Activated CD4-positive, alpha-beta T cell treated with anti-CD3 and anti-CD28 coated beads, Interleukin-2, amount 10 ng/mL, durations not matched to agents 7 days and 5 days (primary cell): ENCODE measurements at regions of chr11 and their contacts with region 1.

Region 1: GRCh38 chr11:45771566-45772448 is 33.1 kb upstream of the SLC35C1 start:
- DNase-seq: peak; percentile 82
- H3K4me3 Mint-ChIP-seq: peak overlapping the region; percentile 74
- H3K27ac Mint-ChIP-seq: peak overlapping the region; percentile 66
- H3K4me1 Mint-ChIP-seq: peaks cover 16% of the 10 kb centered on the region
- H3K27me3 Mint-ChIP-seq: peaks cover 3% of the 10 kb centered on the region

Region 2: DNA sequence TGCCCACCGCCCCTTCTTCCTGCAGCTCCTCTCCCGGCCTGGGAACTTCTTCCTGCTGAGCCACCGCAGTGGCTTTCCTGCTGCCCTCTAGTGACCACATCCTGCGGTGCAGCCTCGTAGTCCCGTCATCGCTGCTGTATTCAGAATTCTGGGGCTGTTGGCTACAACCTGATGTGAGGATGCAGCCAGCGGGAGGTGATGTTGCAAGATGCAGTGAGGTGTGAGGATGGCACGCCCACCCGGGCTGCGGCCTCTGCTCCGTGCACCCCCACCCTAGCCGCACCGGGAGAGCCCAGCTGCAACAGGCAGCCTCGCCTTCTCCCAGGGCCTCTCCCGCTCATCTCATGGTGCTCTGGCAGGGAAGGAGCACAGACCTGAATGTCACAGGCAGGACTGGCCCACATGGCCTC is 116.5 kb before region 1 on chr11:
- CTCF ChIA-PET with region 1: no interaction called
- POLR2A ChIA-PET with region 1: no interaction called
- DNase-seq: peak; percentile 50
- H3K4me3 Mint-ChIP-seq: no peak overlapping the region
- H3K27ac Mint-ChIP-seq: no peak overlapping the region
- H3K4me1 Mint-ChIP-seq: peaks cover 4% of the 10 kb centered on the region
- H3K27me3 Mint-ChIP-seq: peaks cover 7% of the 10 kb centered on the region

Region 3: DNA sequence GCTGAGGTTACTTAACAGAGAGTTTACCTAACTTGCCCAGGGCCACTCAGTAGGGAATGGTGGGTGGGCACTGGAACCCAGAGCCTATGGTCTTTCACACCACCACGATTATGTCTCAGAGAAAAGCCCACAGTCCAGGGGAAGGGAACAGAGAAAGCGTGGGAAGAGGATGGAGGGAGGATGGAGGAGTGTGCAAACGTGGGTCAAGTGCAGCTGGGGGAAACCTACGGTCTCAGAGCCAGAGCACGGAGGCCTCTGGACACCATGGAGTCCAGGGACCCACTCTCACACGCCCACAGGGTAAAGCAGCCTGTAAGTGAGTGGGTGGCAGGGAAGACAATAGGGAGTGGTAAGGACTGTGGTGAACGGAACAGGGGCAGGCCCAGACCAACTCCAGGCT is 14.1 kb before region 1 on chr11:
- CTCF ChIA-PET with region 1: interaction called, 12 read pairs
- POLR2A ChIA-PET with region 1: no interaction called
- DNase-seq: no peak
- H3K4me3 Mint-ChIP-seq: no peak overlapping the region
- H3K27ac Mint-ChIP-seq: no peak overlapping the region
- H3K4me1 Mint-ChIP-seq: no peaks in the 10 kb centered on the region
- H3K27me3 Mint-ChIP-seq: no peaks in the 10 kb centered on the region

Region 4: DNA sequence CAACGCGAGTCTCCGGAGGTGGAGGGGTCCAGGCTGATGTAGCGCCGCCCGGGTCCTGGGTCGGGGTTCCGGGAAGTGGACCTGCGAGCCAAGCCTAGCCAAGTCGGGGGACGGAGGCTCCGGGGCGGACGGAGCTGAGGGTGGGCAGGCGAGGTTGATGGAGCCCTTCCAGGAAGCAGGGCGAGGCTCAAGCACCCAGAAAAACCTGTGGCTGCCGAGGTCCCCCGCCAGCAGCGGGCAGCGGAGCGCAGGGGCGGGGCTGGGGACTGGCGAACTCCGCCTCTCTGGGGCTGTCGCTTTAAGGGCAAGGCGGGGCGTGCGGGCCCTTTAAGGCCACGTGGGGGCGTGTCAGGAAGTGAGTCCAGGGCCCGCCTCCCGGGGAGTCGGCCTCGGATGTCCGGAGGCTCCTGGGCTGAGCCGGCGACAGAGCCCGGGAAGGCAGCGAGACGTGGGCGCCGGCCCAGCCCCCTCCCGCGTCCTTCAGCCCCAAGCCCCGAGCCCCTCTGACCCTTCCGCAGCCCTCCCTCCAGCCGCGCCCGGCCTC is 33.0 kb after region 1 on chr11 and contains the start of gene SLC35C1:
- CTCF ChIA-PET with region 1: interaction called, 14 read pairs
- POLR2A ChIA-PET with region 1: no interaction called
- DNase-seq: peak; percentile 97
- H3K4me3 Mint-ChIP-seq: peak within 1 kb of the TSS; percentile 88
- H3K27ac Mint-ChIP-seq: peak within 1 kb of the TSS; percentile 94
- H3K4me1 Mint-ChIP-seq: peaks cover 50% of the 10 kb centered on the region
- H3K27me3 Mint-ChIP-seq: no peaks in the 10 kb centered on the region
- total RNA-seq, gene SLC35C1: 18.0 to 18.2 TPM